ENCODE measurements at regions of chr4 and their contacts with region 1.

Region 1: DNA sequence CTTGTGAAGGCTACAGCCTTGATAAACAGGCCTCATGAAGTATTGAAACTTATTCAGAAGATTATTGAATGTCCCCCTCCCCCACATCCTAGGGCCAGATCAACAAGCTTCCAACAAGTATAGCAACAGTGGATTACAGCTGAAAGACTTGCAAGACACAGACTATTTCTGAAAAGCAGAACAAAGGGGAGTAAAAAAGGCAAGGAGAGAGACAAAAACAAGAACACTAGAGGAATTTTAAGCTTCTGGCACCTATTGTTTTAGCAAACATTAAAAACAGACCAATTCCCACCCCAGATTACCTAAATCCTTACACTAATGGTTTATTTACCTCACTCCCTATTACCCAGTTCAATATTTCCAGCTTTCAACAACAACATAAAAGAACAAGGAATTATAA is 446.3 kb upstream of the FSTL5 start:
- DNase-seq: no peak
- ATAC-seq: no peak

Region 2: GRCh38 chr4:162874048-162874447 is 263.9 kb after region 1 on chr4:
- intact Hi-C with region 1: no loop called
- DNase-seq: no peak
- ATAC-seq: no peak

Region 3: DNA sequence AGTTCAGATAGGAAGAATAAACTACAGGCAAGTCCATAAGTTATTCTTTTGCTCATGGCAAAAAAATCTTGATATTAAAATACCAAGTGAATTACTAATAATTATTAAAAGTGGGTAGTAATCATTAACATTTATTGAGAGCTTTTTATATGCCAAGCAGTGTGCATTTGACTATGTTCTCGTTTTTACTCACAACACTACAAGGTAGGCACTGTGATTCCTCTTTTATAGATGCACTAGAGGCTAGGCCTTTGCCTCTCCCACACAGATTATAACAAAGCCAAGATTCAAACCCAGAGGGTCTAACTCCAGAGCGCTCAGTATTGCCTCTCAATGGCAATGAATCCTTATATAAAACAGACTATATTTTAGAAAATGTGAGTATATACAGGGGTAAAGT is 302.4 kb after region 1 on chr4:
- intact Hi-C with region 1: no loop called
- DNase-seq: no peak
- ATAC-seq: no peak

Region 4: GRCh38 chr4:163300445-163300844 is 690.3 kb after region 1 on chr4:
- intact Hi-C with region 1: loop called (anchors 5 kb)
- DNase-seq: no peak
- ATAC-seq: no peak

Measured in Right ventricle myocardium superior (tissue), 1 donor.